ENCODE measurements at regions of chr4 and their contacts with region 1.

Region 1: GRCh38 chr4:140252742-140253555 is 99.0 kb upstream of the MAML3 start:
- DNase-seq: peak; percentile 77
- H3K4me3 ChIP-seq: peak overlapping the region; percentile 76
- H3K27ac ChIP-seq: peak overlapping the region; percentile 91
- H3K4me1 ChIP-seq: peaks cover 33% of the 10 kb centered on the region
- H3K27me3 ChIP-seq: no peaks in the 10 kb centered on the region
- CTCF ChIP-seq: peak; percentile 98

Region 2: GRCh38 chr4:139734875-139735380 is 518.0 kb before region 1 on chr4:
- intact Hi-C with region 1: loop called (anchors 10 kb)
- DNase-seq: peak; percentile 90
- H3K4me3 ChIP-seq: peak overlapping the region; percentile 66
- H3K27ac ChIP-seq: peak overlapping the region; percentile 77
- H3K4me1 ChIP-seq: peaks cover 59% of the 10 kb centered on the region
- H3K27me3 ChIP-seq: no peaks in the 10 kb centered on the region
- CTCF ChIP-seq: peak; percentile 93

Region 3: DNA sequence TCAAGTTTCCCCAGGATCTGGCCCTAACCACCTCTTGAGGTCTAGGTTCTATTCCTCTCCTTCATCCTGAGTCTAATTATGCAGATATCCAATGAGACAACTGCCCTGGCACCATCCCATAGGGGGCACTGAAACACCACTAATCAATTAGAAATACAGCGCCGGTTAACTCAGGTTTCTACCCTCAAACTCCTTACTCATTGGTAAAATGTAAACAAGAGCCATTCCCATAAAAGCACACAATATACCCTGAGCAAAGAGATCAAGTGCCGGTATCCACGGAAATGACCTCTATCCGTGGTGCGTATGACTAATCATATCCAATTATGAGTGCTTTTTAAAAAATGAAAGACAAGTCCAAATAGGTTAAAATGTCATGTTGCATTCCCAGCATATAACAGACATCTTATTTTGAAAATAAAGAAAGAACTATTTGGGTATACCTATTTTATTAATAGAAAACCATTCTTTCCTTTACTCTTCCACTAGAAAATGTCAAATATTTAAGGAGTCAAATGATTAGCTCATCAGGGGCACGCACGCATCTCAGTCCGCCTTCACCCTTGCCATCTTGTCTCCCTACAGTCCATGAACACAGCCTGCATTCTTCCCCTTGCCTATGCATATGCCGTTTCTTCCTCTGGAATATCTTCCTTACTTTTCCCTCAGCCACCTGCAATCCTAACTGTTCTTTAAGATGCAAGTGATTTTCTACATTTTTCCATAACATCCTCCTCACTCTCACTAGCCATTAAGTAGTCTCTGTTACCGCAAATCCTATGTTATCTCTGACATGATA is 240.1 kb before region 1 on chr4:
- intact Hi-C with region 1: loop called (anchors 5 kb)
- DNase-seq: peak; percentile 38
- H3K4me3 ChIP-seq: no peak overlapping the region
- H3K27ac ChIP-seq: no peak overlapping the region
- H3K4me1 ChIP-seq: peaks cover 5% of the 10 kb centered on the region
- H3K27me3 ChIP-seq: no peaks in the 10 kb centered on the region
- CTCF ChIP-seq: peak; percentile 75

Region 4: DNA sequence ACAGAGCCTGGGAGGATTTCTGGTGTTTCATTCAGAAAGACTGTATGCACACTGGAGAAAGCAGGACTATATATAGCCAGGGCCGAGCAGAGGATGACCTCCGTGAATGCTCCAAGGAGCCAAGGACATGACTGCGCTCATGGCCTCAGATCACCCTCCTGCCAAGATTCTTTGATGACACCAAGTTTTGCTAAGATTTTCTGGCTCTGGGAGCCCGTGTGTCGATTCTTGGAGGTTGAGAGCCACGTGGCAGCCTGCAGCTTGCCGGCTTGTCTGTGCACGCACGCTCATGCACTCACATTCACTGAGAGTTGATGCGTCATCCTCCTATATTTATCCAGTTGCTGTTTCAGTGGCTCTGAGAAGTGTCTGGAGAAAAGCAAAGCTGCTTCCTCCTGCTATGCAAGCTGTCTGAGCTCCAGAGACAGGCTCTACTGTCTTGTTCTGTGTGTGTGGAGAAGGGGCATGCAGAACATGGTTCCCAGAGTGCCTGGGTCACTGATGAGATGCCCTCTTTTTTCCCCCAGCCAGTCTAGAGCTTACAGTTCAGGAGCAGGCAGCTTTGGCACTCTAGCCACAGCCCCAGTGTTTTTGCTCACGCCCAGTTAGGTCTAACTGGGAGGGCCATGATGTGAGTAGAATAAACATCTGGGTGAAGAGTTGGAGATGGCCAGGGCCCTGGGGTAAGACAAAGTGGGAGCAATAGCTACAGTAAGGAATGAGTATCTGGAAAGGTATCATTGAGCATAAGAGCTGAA is 55.6 kb after region 1 on chr4:
- intact Hi-C with region 1: no loop called
- DNase-seq: peak; percentile 66
- H3K4me3 ChIP-seq: peak overlapping the region; percentile 3
- H3K27ac ChIP-seq: peak overlapping the region; percentile 91
- H3K4me1 ChIP-seq: peaks cover 35% of the 10 kb centered on the region
- H3K27me3 ChIP-seq: no peaks in the 10 kb centered on the region
- CTCF ChIP-seq: no peak

Region 5: GRCh38 chr4:140326395-140326993 is 73.5 kb after region 1 on chr4:
- intact Hi-C with region 1: no loop called
- DNase-seq: no peak
- H3K4me3 ChIP-seq: no peak overlapping the region
- H3K27ac ChIP-seq: no peak overlapping the region
- H3K4me1 ChIP-seq: no peaks in the 10 kb centered on the region
- H3K27me3 ChIP-seq: no peaks in the 10 kb centered on the region
- CTCF ChIP-seq: peak; percentile 76

Measured in left ventricle myocardium inferior (tissue), 1 donor.